B cell (primary cell): ENCODE measurements at regions of chr3 and their contacts with region 1.

Region 1: DNA sequence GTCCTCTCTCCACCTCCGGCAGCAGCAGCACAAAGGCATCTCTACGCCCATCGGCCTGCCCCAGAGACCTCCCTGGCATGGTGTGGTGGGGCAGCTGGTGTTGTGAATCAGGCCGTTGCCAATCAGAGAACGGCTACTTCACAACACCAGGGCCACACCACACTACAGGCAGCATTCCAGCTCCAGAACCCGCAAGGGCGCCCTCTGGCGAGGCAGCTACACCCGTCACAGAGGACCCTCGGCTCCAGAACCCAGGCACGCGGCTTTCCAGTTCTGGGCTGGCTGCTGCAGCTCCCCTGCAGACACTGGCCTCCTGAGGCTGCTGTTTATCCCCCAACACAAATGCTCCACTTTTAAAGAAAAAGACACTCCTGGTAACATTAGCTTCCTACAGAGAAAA is 127.5 kb upstream of the TOPAZ1 start:
- DNase-seq: peak; percentile 49
- ATAC-seq: peak; percentile 39
- H3K4me3 ChIP-seq: no peak overlapping the region
- H3K4me3 Mint-ChIP-seq: no peak overlapping the region
- H3K27ac ChIP-seq: no peak overlapping the region
- H3K27ac Mint-ChIP-seq: no peak overlapping the region
- H3K4me1 ChIP-seq: no peaks in the 10 kb centered on the region
- H3K4me1 Mint-ChIP-seq: no peaks in the 10 kb centered on the region
- H3K27me3 ChIP-seq: peaks cover 0 to 6% (median 0%) of the 10 kb centered on the region in 4 experiments
- H3K27me3 Mint-ChIP-seq: peaks cover 10% of the 10 kb centered on the region
- CTCF ChIP-seq: peak; percentile 47

Region 2: GRCh38 chr3:43879166-43879565 is 235.0 kb before region 1 on chr3:
- CTCF ChIA-PET with region 1: interaction called, 9 read pairs
- POLR2A ChIA-PET with region 1: no interaction called
- intact Hi-C with region 1: loop called (anchors 1 kb)
- DNase-seq: peak; percentile 39
- ATAC-seq: no peak
- H3K4me3 ChIP-seq: no peak overlapping the region
- H3K4me3 Mint-ChIP-seq: no peak overlapping the region
- H3K27ac ChIP-seq: no peak overlapping the region
- H3K27ac Mint-ChIP-seq: no peak overlapping the region
- H3K4me1 ChIP-seq: no peaks in the 10 kb centered on the region
- H3K4me1 Mint-ChIP-seq: no peaks in the 10 kb centered on the region
- H3K27me3 ChIP-seq: no peaks in the 10 kb centered on the region
- H3K27me3 Mint-ChIP-seq: peaks cover 3% of the 10 kb centered on the region
- CTCF ChIP-seq: peak; percentile 37

Region 3: DNA sequence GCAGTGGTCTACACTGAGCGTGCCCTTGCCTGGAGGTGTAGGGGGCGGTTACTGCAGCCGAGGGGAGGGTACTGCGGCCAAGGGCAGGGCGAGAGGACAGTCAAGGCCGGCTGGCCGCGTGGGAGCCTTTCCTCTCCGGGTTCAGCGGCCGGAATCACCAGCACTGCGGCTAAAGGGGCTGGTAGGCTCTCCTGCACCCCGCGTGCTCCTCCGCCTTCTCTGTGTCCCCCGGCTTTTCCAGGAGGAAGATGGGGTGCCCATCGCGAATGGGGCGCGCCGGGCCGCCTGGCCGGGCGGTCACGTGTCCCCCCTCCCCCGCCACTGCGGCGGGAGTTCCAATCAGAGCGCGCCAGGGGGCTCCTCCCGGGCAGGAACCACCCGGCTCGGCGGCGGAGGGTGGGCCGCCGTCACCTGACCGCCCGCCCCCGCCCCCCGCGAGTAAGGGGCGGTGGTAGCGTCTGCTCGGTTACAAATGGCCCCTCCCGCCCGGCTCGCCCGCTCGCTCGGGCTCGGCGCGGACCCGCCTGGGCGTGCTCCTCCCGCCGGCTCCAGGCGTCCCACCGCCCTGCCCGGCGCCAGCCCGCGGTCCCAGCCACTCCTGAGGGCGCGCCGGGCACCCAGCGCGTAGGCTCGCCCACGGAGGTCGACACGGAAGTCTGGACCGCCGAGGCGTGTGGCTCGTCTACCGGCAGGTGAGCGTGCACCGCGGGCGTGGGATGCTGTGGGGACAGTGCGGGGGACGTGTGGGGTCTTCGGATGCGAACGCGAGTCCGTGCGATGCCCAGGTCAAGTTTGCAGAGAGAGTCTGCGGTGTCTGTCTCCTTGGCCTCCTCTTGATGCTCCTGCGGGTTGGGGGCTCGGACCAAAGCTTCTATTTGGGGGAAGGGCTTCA is 115.1 kb before region 1 on chr3:
- CTCF ChIA-PET with region 1: interaction called, 9 read pairs
- POLR2A ChIA-PET with region 1: no interaction called
- intact Hi-C with region 1: loop called (anchors 1 kb)
- DNase-seq: peak; percentile 63
- ATAC-seq: peak; percentile 57
- H3K4me3 ChIP-seq: peak overlapping the region in 4 of 5 experiments; percentile 37 to 74 (median 56)
- H3K4me3 Mint-ChIP-seq: peak overlapping the region; percentile 95
- H3K27ac ChIP-seq: no peak overlapping the region
- H3K27ac Mint-ChIP-seq: peak overlapping the region; percentile 67
- H3K4me1 ChIP-seq: peaks cover 50 to 54% of the 10 kb centered on the region in 2 donors
- H3K4me1 Mint-ChIP-seq: peaks cover 53% of the 10 kb centered on the region
- H3K27me3 ChIP-seq: peaks cover 0 to 62% (median 34%) of the 10 kb centered on the region in 4 experiments
- H3K27me3 Mint-ChIP-seq: peaks cover 57% of the 10 kb centered on the region
- CTCF ChIP-seq: no peak

Region 4: DNA sequence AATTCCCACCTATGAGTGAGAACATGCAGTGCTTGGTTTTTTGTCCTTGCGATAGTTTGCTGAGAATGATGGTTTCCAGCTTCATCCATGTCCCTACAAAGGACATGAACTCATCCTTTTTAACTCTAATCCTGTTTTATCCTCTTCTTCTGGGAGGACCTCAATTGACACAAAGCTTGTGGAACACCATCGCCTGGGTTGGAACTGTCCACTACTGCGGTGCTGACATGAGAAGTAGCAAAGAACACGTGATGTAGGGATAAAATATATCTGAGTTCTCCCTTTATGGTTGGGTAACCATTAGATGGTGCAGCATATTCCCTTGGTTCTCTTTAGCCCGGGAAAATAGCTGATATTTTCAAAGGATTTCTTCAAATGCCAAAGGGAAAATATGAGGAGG is 22.3 kb after region 1 on chr3:
- CTCF ChIA-PET with region 1: no interaction called
- POLR2A ChIA-PET with region 1: no interaction called
- intact Hi-C with region 1: no loop called
- DNase-seq: no peak
- ATAC-seq: no peak
- H3K4me3 ChIP-seq: no peak overlapping the region
- H3K4me3 Mint-ChIP-seq: no peak overlapping the region
- H3K27ac ChIP-seq: no peak overlapping the region
- H3K27ac Mint-ChIP-seq: no peak overlapping the region
- H3K4me1 ChIP-seq: no peaks in the 10 kb centered on the region
- H3K4me1 Mint-ChIP-seq: no peaks in the 10 kb centered on the region
- H3K27me3 ChIP-seq: peaks cover 0 to 5% (median 0%) of the 10 kb centered on the region in 4 experiments
- H3K27me3 Mint-ChIP-seq: peaks cover 25% of the 10 kb centered on the region
- CTCF ChIP-seq: no peak